ENCODE measurements at regions of chr1 and their contacts with region 1.

Region 1: GRCh38 chr1:52552505-52553361 is at the start of gene TUT4:
- DNase-seq: peak; percentile 87
- H3K4me3 Mint-ChIP-seq: peak within 1 kb of the TSS; percentile 63
- H3K27ac Mint-ChIP-seq: no peak within 1 kb of the TSS
- H3K4me1 Mint-ChIP-seq: peaks cover 32% of the 10 kb centered on the region
- H3K27me3 Mint-ChIP-seq: no peaks in the 10 kb centered on the region
- total RNA-seq, gene TUT4: 54.6 to 62.1 TPM

Region 2: GRCh38 chr1:52141513-52142219 is 411.1 kb before region 1 on chr1 and contains the start of gene ZFYVE9:
- CTCF ChIA-PET with region 1: no interaction called
- POLR2A ChIA-PET with region 1: no interaction called
- intact Hi-C with region 1: loop called (anchors 5 kb)
- DNase-seq: peak; percentile 75
- H3K4me3 Mint-ChIP-seq: peak within 1 kb of the TSS; percentile 80
- H3K27ac Mint-ChIP-seq: no peak within 1 kb of the TSS
- H3K4me1 Mint-ChIP-seq: peaks cover 39% of the 10 kb centered on the region
- H3K27me3 Mint-ChIP-seq: peaks cover 3% of the 10 kb centered on the region
- total RNA-seq, gene ZFYVE9: 2.6 to 2.9 TPM

Region 3: DNA sequence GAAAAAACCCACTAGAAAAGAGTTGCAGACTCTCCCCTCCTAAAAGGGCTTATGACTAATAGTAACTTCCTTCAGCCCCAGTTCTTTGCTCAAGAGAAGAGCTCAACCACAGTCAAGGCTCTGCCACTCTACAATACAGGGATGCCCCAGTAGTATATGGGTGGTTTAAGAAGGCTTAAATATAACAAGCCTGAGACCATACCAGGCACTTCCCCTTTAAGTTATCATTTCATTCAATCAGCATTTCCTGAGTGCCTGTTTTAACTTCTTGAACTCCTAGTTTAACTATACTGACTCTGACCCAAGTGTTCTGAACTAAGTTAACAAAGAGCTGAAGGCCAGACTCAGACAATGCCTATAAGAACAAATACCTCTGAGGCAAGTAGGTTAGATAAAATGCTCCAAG is 128.5 kb before region 1 on chr1:
- CTCF ChIA-PET with region 1: no interaction called
- POLR2A ChIA-PET with region 1: interaction called, 3 read pairs
- intact Hi-C with region 1: loop called (anchors 1 kb)
- DNase-seq: peak; percentile 34
- H3K4me3 Mint-ChIP-seq: peak overlapping the region; percentile 7
- H3K27ac Mint-ChIP-seq: peak overlapping the region; percentile 77
- H3K4me1 Mint-ChIP-seq: peaks cover 45% of the 10 kb centered on the region
- H3K27me3 Mint-ChIP-seq: no peaks in the 10 kb centered on the region

Region 4: DNA sequence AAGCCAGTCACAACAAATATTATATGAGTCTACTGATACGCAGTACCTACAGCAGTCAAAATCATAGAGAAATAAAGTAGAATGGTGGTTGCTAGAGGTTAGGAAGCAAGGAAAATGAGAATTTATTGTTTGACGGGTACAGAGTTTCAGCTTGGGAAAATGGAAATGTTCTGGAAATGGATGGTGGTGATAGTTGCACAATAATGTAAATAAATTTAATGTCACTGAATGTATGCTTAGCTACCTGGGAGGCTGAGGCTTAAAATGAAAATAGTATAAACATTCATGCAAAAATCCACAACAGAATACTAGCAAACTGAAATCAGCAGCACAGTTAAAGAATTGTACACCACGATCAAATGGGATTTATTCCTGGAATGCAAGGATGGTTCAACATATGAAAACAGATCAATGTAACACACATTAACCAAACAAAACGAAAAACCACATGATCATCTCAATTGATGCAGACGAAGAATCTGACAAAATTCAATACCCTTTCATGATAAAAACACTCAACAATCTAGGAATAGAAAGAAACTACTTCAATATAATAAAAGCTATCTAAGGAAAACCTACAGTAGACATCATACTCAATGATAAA is 10.5 kb before region 1 on chr1:
- CTCF ChIA-PET with region 1: no interaction called
- POLR2A ChIA-PET with region 1: no interaction called
- intact Hi-C with region 1: no loop called
- DNase-seq: no peak
- H3K4me3 Mint-ChIP-seq: no peak overlapping the region
- H3K27ac Mint-ChIP-seq: no peak overlapping the region
- H3K4me1 Mint-ChIP-seq: peaks cover 24% of the 10 kb centered on the region
- H3K27me3 Mint-ChIP-seq: no peaks in the 10 kb centered on the region

Region 5: DNA sequence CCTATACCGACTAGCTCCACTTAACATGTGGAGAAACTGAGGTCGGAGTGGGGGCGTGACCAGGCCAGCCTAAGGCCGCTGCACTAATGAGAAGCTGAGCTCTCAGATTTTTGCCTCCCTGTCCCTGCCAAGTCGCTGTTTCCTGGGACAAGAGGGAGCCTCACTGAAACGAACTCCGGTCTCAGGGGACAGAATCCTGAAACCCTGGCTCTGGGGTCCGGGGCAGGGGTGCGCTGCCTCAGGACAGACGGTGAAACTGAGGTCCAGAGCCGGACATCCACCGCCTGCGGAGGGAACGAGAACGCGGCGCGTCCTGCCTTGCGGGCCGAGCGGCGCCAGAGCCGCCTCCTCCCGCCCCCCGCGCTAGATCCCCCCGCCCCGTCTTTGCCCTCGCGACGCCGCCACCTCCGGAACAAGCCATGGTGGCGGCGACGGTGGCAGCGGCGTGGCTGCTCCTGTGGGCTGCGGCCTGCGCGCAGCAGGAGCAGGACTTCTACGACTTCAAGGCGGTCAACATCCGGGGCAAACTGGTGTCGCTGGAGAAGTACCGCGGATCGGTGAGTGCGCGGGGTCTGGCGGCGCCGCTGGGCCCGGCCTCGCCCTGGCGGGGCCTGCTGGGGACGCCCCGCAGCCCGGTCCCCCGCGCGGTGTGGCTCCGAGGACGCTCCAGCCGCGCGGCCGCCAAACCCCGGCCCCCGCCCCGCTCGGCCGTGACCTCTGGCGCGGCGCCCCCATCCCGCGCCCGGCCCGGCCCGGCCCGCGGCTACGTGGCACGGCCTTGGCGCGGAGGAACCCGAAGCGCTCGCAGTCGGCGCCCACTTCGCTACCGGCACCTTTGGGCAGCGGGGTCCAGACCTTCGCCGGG is 49.5 kb after region 1 on chr1 and contains the start of gene GPX7:
- CTCF ChIA-PET with region 1: interaction called, 3 read pairs
- POLR2A ChIA-PET with region 1: interaction called, 10 read pairs
- intact Hi-C with region 1: loop called (anchors 2 kb)
- DNase-seq: peak; percentile 65
- H3K4me3 Mint-ChIP-seq: peak within 1 kb of the TSS; percentile 91
- H3K27ac Mint-ChIP-seq: peak within 1 kb of the TSS; percentile 90
- H3K4me1 Mint-ChIP-seq: peaks cover 40% of the 10 kb centered on the region
- H3K27me3 Mint-ChIP-seq: no peaks in the 10 kb centered on the region
- total RNA-seq, gene GPX7: 19.9 to 20.6 TPM

Region 6: GRCh38 chr1:52659356-52659755 is 106.6 kb after region 1 on chr1:
- CTCF ChIA-PET with region 1: interaction called, 3 read pairs
- POLR2A ChIA-PET with region 1: interaction called, 3 read pairs
- intact Hi-C with region 1: loop called (anchors 1 kb)
- DNase-seq: peak; percentile 66
- H3K4me3 Mint-ChIP-seq: peak overlapping the region; percentile 46
- H3K27ac Mint-ChIP-seq: peak overlapping the region; percentile 85
- H3K4me1 Mint-ChIP-seq: peaks cover 21% of the 10 kb centered on the region
- H3K27me3 Mint-ChIP-seq: no peaks in the 10 kb centered on the region

Region 7: DNA sequence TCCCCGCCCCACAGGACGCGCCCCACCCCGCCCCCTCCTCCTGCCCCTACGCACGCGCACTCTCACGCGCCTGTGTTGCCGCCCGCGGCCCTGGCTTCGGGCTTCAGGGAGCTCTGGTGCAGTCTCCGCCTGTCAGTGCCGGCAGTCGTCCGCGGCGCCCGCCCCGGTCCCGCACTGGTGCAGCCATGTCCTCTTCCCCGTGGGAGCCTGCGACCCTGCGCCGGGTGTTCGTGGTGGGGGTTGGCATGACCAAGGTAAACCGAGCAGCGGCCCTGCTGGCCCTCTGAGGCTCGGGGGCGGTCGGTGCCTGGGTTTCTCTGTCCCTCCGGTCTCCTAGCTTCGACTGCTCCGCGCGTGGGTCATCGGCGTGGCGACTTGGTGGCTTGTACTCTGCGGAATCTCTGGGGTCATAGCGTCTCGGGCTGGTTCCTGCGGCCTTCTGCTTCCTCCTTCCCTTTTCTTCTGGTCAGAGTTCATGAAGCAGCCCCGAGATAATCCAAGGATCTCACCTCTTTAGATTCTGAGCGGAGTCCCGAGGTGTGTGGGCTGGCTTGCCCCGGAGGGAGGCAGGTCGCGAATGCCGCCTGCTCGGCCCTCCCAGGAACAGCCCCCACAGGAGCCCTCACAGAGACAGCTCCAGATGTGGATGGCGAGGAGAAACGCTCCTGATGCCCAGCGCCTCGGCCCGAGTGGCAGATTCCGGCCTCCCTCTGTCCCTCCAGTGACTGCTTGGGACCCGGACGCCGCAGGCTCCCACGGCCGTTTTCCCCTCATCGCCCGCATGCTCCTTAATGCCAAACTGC is 374.7 kb after region 1 on chr1 and contains the start of gene SCP2:
- CTCF ChIA-PET with region 1: no interaction called
- POLR2A ChIA-PET with region 1: no interaction called
- intact Hi-C with region 1: loop called (anchors 10 kb)
- DNase-seq: peak; percentile 85
- H3K4me3 Mint-ChIP-seq: peak within 1 kb of the TSS; percentile 76
- H3K27ac Mint-ChIP-seq: no peak within 1 kb of the TSS
- H3K4me1 Mint-ChIP-seq: peaks cover 15% of the 10 kb centered on the region
- H3K27me3 Mint-ChIP-seq: no peaks in the 10 kb centered on the region
- total RNA-seq, gene SCP2: 78.1 to 81.1 TPM

Measured in activated CD4-positive, alpha-beta memory T cell treated with anti-CD3 and anti-CD28 coated beads for 36 hours (primary cell).